ENCODE measurements at regions of chr3 and their contacts with region 1.

Region 1: GRCh38 chr3:183635431-183636220 is at the start of gene KLHL24:
- DNase-seq: peak; percentile 93 to 98 (median 96)
- H3K4me3 ChIP-seq: peak within 1 kb of the TSS; percentile 76 to 100 (median 99)
- H3K27ac ChIP-seq: peak within 1 kb of the TSS; percentile 94 to 100 (median 100)
- H3K27me3 ChIP-seq: no peaks in the 10 kb centered on the region
- CTCF ChIP-seq: peak in 32 of 56 donors; percentile 6 to 52 (median 28)
- total RNA-seq, gene KLHL24: 171 to 344 (median 241) TPM

Region 2: GRCh38 chr3:182879031-182879611 is 756.5 kb before region 1 on chr3:
- intact Hi-C with region 1: no loop called
- DNase-seq: no peak
- H3K4me3 ChIP-seq: no peak overlapping the region
- H3K27ac ChIP-seq: no peak overlapping the region
- H3K27me3 ChIP-seq: no peaks in the 10 kb centered on the region
- CTCF ChIP-seq: no peak

Region 3: DNA sequence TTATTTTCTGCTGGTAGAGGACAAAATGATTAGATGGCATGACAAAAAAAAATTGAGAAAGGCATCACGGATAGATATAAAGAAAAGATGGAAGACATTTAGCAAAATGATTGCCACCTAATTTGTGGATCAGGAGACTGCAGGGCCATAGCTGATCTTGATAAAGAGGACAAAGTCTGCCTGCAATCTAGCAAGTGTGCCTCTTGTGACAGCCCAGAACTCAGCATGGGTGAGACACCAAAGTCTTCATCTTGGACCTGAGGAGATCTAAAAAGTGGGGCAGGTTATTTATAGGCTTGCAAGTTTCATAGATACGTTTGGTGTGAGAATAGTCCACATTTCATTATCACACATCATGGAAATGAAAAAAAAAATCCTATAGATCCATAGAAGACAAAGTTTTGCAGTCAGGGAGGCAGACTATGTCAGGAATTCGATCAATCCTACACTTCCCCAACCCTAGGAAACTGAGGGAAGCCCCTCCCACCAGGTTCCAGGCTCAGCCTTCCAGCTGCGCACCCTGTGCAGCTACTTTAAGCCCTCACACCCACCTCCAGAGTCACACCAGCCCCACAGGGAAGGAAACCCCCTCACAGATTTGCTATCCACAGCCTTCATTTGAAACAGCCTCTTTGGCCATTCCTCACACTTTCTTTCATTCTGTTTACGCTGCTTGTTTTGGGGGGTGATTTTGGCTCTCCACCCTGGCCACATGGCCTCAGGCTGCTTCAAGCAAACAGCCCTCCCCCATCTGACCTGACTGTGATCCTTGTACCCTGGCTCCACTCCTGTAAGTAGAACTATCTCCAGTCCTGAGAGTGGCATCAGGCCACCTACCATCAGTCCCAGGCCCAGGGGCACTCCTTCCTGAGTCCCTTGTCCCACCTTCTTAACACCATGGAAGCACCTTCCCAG is 52.0 kb before region 1 on chr3:
- intact Hi-C with region 1: loop called in 1 of 2 experiments (anchors 2 kb)
- DNase-seq: no peak
- H3K4me3 ChIP-seq: no peak overlapping the region
- H3K27ac ChIP-seq: peak overlapping the region; percentile 32 to 93 (median 81)
- H3K27me3 ChIP-seq: no peaks in the 10 kb centered on the region
- CTCF ChIP-seq: no peak

Region 4: GRCh38 chr3:183697610-183698317 is 62.1 kb after region 1 on chr3 and contains the start of gene YEATS2:
- intact Hi-C with region 1: loop called (anchors 1 kb)
- DNase-seq: peak in 9 of 10 donors; percentile 31 to 81 (median 49)
- H3K4me3 ChIP-seq: peak within 1 kb of the TSS; percentile 47 to 99 (median 93)
- H3K27ac ChIP-seq: peak within 1 kb of the TSS; percentile 74 to 98 (median 94)
- H3K27me3 ChIP-seq: no peaks in the 10 kb centered on the region
- CTCF ChIP-seq: peak in 1 of 56 donors; percentile 8
- total RNA-seq, gene YEATS2: 39.9 to 82.1 (median 59.9) TPM

Region 5: DNA sequence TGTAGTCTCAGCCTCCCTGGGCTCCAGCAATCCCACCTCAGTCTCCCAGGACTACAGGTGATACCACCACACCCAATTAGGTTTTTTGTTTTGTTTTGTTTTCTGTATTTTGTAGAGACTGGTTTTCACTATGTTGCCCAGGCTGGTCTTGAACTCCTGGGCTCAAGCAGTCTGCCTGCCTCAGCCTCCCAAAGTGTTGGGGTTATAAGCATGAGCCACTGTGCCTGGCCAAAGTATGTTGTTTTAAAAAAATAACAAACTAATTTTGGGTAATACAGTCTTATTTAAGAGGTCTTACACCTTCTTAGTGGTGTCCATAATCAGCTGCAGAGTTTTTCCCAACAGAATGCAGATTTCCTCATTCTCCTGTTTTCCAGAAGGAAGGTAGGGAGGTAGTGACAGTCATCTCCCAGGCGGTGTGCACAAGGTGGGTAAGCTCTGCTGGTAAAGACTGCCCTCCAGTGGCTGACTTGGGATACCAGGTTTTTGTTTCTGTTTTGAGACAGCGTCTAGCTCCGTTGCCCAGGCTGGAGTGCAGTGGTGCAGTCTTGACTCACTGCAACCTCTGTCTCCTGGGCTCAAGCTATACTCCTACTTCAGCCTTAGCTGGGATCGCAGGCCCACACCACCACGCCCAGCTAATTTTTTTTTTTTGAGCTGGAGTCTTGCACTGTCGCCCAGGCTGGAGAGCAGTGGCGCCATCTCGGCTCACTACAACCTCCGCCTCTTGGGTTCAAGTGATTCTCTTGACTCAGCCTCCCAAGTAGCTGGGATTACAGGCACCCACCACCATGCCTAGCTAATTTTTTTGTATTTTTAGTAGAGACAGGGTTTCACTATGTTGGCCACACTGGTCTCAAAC is 131.3 kb after region 1 on chr3:
- intact Hi-C with region 1: loop called in 1 of 2 experiments (anchors 5 kb)
- DNase-seq: peak in 9 of 10 donors; percentile 66 to 86 (median 74)
- H3K4me3 ChIP-seq: peak overlapping the region in 1 of 59 donors; percentile 10
- H3K27ac ChIP-seq: peak overlapping the region in 46 of 59 donors; percentile 0 to 80 (median 58)
- H3K27me3 ChIP-seq: no peaks in the 10 kb centered on the region
- CTCF ChIP-seq: peak; percentile 66 to 93 (median 84)